T-cell (primary cell): ENCODE measurements at regions of chr2 and their contacts with region 1.

Region 1: GRCh38 chr2:24971536-24972314 is at the start of gene DNAJC27:
- DNase-seq: peak; percentile 91 to 99 (median 97)
- ATAC-seq: peak; percentile 86 to 93 (median 91)
- H3K4me3 ChIP-seq: peak within 1 kb of the TSS; percentile 90 to 93
- H3K4me3 Mint-ChIP-seq: peak within 1 kb of the TSS; percentile 92 to 98 (median 97)
- H3K27ac ChIP-seq: peak within 1 kb of the TSS; percentile 100
- H3K27ac Mint-ChIP-seq: peak within 1 kb of the TSS; percentile 100
- H3K4me1 ChIP-seq: peaks cover 15 to 17% of the 10 kb centered on the region in 2 experiments
- H3K4me1 Mint-ChIP-seq: peaks cover 22 to 31% (median 25%) of the 10 kb centered on the region in 3 donors
- H3K27me3 ChIP-seq: no peaks in the 10 kb centered on the region
- H3K27me3 Mint-ChIP-seq: no peaks in the 10 kb centered on the region
- total RNA-seq, gene DNAJC27: 10.0 to 15.2 (median 12.7) TPM

Region 2: GRCh38 chr2:25041928-25042320 is 70.2 kb after region 1 on chr2 and contains the start of gene EFR3B:
- CTCF ChIA-PET with region 1: interaction called, 5 to 10 read pairs
- POLR2A ChIA-PET with region 1: interaction called in 1 of 2 experiments, 3 read pairs
- DNase-seq: peak; percentile 70 to 94 (median 85)
- ATAC-seq: peak; percentile 95 to 97 (median 96)
- H3K4me3 ChIP-seq: peak within 1 kb of the TSS; percentile 45 to 73
- H3K4me3 Mint-ChIP-seq: peak within 1 kb of the TSS; percentile 81 to 83 (median 82)
- H3K27ac ChIP-seq: no peak within 1 kb of the TSS
- H3K27ac Mint-ChIP-seq: no peak within 1 kb of the TSS
- H3K4me1 ChIP-seq: peaks cover 2 to 22% of the 10 kb centered on the region in 2 experiments
- H3K4me1 Mint-ChIP-seq: peaks cover 19 to 24% (median 23%) of the 10 kb centered on the region in 3 donors
- H3K27me3 ChIP-seq: peaks cover 2 to 47% of the 10 kb centered on the region in 2 experiments
- H3K27me3 Mint-ChIP-seq: peaks cover 33 to 39% of the 10 kb centered on the region in 2 donors
- total RNA-seq, gene EFR3B: 0.09 to 0.10 (median 0.09) TPM in 3 of 5 donors, not detected in the others

Region 3: GRCh38 chr2:25197336-25198208 is 225.8 kb after region 1 on chr2:
- CTCF ChIA-PET with region 1: interaction called, 5 to 15 read pairs
- POLR2A ChIA-PET with region 1: no interaction called
- DNase-seq: no peak
- ATAC-seq: no peak
- H3K4me3 ChIP-seq: no peak overlapping the region
- H3K4me3 Mint-ChIP-seq: no peak overlapping the region
- H3K27ac ChIP-seq: no peak overlapping the region
- H3K27ac Mint-ChIP-seq: no peak overlapping the region
- H3K4me1 ChIP-seq: peaks cover 5 to 12% of the 10 kb centered on the region in 2 experiments
- H3K4me1 Mint-ChIP-seq: peaks cover 14 to 19% (median 17%) of the 10 kb centered on the region in 3 donors
- H3K27me3 ChIP-seq: peaks cover 0 to 7% of the 10 kb centered on the region in 2 experiments
- H3K27me3 Mint-ChIP-seq: no peaks in the 10 kb centered on the region

Region 4: GRCh38 chr2:25514043-25514637 is 542.4 kb after region 1 on chr2:
- CTCF ChIA-PET with region 1: no interaction called
- POLR2A ChIA-PET with region 1: no interaction called
- DNase-seq: no peak
- ATAC-seq: no peak
- H3K4me3 ChIP-seq: no peak overlapping the region
- H3K4me3 Mint-ChIP-seq: no peak overlapping the region
- H3K27ac ChIP-seq: no peak overlapping the region
- H3K27ac Mint-ChIP-seq: peak overlapping the region in 1 of 2 donors; percentile 11
- H3K4me1 ChIP-seq: peaks cover 0 to 7% of the 10 kb centered on the region in 2 experiments
- H3K4me1 Mint-ChIP-seq: peaks cover 6 to 9% (median 6%) of the 10 kb centered on the region in 3 donors
- H3K27me3 ChIP-seq: no peaks in the 10 kb centered on the region
- H3K27me3 Mint-ChIP-seq: no peaks in the 10 kb centered on the region